ENCODE measurements at regions of chr7 and their contacts with region 1.

Region 1: GRCh38 chr7:7182156-7183060 is at the start of gene C1GALT1:
- DNase-seq: peak; percentile 92 to 98 (median 98)
- ATAC-seq: peak; percentile 93
- H3K4me3 ChIP-seq: peak within 1 kb of the TSS; percentile 91
- H3K4me3 Mint-ChIP-seq: peak within 1 kb of the TSS in 9 of 10 donors; percentile 87 to 97 (median 94)
- H3K27ac ChIP-seq: peak within 1 kb of the TSS; percentile 95
- H3K27ac Mint-ChIP-seq: peak within 1 kb of the TSS; percentile 93 to 100 (median 98)
- H3K4me1 ChIP-seq: peaks cover 22% of the 10 kb centered on the region in 2 donors
- H3K4me1 Mint-ChIP-seq: peaks cover 0 to 14% (median 10%) of the 10 kb centered on the region in 7 donors
- H3K27me3 ChIP-seq: no peaks in the 10 kb centered on the region
- H3K27me3 Mint-ChIP-seq: no peaks in the 10 kb centered on the region
- total RNA-seq, gene C1GALT1: 51.4 to 60.1 (median 55.6) TPM

Region 2: DNA sequence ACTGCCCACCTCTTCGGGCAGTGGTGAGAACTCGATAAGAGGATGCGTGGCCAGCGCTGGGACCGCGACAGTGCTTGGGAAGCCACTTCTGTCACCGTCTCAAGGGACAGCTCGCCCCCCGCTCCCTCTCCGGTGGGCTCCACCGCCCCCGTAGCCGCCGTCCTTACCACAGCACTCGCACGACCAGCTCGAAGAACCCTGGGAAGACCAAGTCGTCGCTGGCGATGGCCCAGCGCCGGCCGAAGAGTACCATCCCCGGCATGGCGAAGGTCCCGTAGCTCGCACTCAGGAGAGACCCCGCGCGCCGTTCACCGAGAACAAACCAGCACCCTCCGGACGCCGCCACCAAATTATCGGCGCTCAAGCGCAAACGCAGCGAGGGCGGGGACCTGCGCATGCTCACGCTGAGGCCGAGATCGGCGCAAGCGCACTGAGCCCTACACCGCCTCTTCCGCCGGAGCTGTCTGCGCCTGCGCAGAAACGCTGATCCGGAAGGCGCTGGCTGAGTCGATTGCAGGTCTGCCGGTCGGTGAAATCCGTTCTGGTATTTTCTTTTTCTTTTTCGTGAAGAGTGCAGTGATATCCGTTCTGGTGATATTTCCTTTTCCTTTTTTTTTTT is 734.7 kb before region 1 on chr7 and contains the start of gene DAGLB:
- CTCF ChIA-PET with region 1: no interaction called
- POLR2A ChIA-PET with region 1: no interaction called
- intact Hi-C with region 1: loop called in 1 of 2 experiments (anchors 5 kb)
- DNase-seq: peak; percentile 94 to 99 (median 97)
- ATAC-seq: peak; percentile 87
- H3K4me3 ChIP-seq: peak within 1 kb of the TSS; percentile 87
- H3K4me3 Mint-ChIP-seq: peak within 1 kb of the TSS; percentile 92 to 99 (median 96)
- H3K27ac ChIP-seq: peak within 1 kb of the TSS; percentile 80
- H3K27ac Mint-ChIP-seq: peak within 1 kb of the TSS; percentile 95 to 98 (median 95)
- H3K4me1 ChIP-seq: peaks cover 8 to 16% of the 10 kb centered on the region in 2 donors
- H3K4me1 Mint-ChIP-seq: peaks cover 27 to 51% (median 40%) of the 10 kb centered on the region in 7 donors
- H3K27me3 ChIP-seq: no peaks in the 10 kb centered on the region
- H3K27me3 Mint-ChIP-seq: peaks cover 0 to 3% (median 0%) of the 10 kb centered on the region in 5 donors
- total RNA-seq, gene DAGLB: 20.6 to 44.3 (median 39.8) TPM

Region 3: DNA sequence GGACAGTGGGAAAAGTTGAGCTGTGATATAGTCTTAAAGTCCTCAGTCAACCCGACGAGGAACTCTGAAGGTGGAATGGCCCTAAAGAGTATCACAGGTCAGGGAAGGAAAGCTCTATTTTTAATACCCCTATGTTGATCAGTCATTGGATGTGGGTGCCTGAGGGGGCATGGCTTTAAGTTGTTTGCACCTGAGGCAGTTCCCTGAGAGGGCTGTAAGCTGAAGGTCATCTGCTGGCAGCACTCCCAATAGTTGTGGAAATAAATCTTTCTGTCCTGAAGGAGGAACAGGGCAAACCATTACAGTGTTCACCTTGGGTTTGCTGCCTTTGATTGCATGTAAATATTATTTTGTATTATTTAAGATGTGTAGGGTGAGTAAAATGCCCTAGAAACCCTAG is 17.8 kb before region 1 on chr7:
- CTCF ChIA-PET with region 1: interaction called, 8 read pairs
- POLR2A ChIA-PET with region 1: interaction called, 109 read pairs
- intact Hi-C with region 1: no loop called
- DNase-seq: no peak
- ATAC-seq: no peak
- H3K4me3 ChIP-seq: no peak overlapping the region
- H3K4me3 Mint-ChIP-seq: peak overlapping the region in 5 of 10 donors; percentile 10 to 61 (median 44)
- H3K27ac ChIP-seq: no peak overlapping the region
- H3K27ac Mint-ChIP-seq: peak overlapping the region in 8 of 9 donors; percentile 3 to 71 (median 35)
- H3K4me1 ChIP-seq: peaks cover 8 to 25% of the 10 kb centered on the region in 2 donors
- H3K4me1 Mint-ChIP-seq: peaks cover 21 to 62% (median 53%) of the 10 kb centered on the region in 7 donors
- H3K27me3 ChIP-seq: no peaks in the 10 kb centered on the region
- H3K27me3 Mint-ChIP-seq: no peaks in the 10 kb centered on the region

Region 4: GRCh38 chr7:7249814-7250213 is 67.4 kb after region 1 on chr7:
- CTCF ChIA-PET with region 1: no interaction called
- POLR2A ChIA-PET with region 1: interaction called, 3 read pairs
- intact Hi-C with region 1: loop called in 1 of 2 experiments (anchors 2 kb)
- DNase-seq: no peak
- ATAC-seq: no peak
- H3K4me3 ChIP-seq: no peak overlapping the region
- H3K4me3 Mint-ChIP-seq: no peak overlapping the region
- H3K27ac ChIP-seq: no peak overlapping the region
- H3K27ac Mint-ChIP-seq: peak overlapping the region in 1 of 9 donors; percentile 92
- H3K4me1 ChIP-seq: peaks cover 0 to 6% of the 10 kb centered on the region in 2 donors
- H3K4me1 Mint-ChIP-seq: peaks cover 10 to 45% (median 29%) of the 10 kb centered on the region in 7 donors
- H3K27me3 ChIP-seq: no peaks in the 10 kb centered on the region
- H3K27me3 Mint-ChIP-seq: no peaks in the 10 kb centered on the region

Region 5: DNA sequence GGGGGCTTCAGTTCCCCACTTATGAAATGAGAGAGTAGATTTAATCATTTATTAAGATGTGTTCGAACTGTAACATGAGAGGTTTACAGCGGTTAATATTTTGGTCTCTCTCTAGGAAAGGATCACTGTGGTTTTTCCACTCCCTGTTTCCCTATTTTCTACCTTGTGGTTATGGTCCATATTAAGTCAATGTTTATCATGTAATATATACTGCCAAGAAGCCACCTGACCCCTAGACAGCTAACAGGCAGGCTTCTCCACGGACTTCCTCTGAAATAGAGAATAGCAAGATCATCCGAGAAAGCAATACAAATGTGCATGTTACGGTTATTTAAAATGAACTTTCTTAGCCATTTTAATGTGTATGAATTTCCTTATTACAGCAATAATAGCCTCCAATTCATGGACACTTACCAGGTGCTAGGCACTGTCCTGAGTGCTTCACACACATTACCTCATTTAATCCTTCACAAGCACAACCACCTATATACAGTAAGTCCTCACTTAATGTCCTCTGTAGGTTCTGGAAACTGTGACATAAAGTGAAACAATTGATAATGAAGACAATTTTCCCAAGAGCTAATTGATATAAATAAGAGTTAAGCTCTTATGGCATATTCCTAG is 354.1 kb after region 1 on chr7:
- CTCF ChIA-PET with region 1: no interaction called
- POLR2A ChIA-PET with region 1: interaction called, 3 read pairs
- intact Hi-C with region 1: loop called (anchors 1 kb)
- DNase-seq: no peak
- ATAC-seq: no peak
- H3K4me3 ChIP-seq: no peak overlapping the region
- H3K4me3 Mint-ChIP-seq: no peak overlapping the region
- H3K27ac ChIP-seq: no peak overlapping the region
- H3K27ac Mint-ChIP-seq: no peak overlapping the region
- H3K4me1 ChIP-seq: no peaks in the 10 kb centered on the region
- H3K4me1 Mint-ChIP-seq: peaks cover 0 to 3% (median 0%) of the 10 kb centered on the region in 7 donors
- H3K27me3 ChIP-seq: no peaks in the 10 kb centered on the region
- H3K27me3 Mint-ChIP-seq: peaks cover 0 to 26% (median 5%) of the 10 kb centered on the region in 5 donors

Region 6: DNA sequence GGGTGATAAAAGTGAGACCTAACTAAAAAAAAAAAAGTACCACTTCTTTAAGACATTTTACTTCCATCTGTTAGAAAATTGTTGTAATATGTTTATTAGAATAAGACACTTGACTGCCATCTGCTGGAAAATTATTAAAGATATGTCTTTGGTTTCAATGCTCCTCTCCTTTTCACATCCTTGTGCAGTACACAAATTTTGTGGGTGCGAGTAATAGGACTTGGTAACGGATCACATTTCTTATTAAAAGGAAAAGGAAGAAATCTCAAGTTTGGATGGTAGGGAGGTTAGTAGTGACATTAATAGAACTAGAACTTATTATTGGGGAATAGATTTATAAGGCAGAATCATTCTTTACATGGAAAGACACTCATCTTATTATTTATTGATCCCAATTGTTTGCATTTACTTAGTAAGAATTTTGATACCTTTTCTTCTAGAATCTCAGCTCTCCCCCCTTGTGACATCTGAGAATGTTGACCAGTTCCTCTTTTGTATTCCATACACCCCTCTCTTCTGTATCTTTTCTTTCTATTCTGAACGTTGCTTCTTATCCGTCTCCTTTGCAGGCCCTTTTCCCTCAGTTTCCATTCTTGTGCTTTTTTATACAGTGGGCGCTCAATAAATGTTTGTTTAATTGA is 579.1 kb after region 1 on chr7:
- CTCF ChIA-PET with region 1: no interaction called
- POLR2A ChIA-PET with region 1: interaction called, 4 read pairs
- intact Hi-C with region 1: loop called (anchors 1 to 5 kb)
- DNase-seq: peak in 7 of 9 donors; percentile 25 to 59 (median 51)
- ATAC-seq: peak; percentile 45
- H3K4me3 ChIP-seq: peak overlapping the region; percentile 48
- H3K4me3 Mint-ChIP-seq: peak overlapping the region; percentile 69 to 99 (median 90)
- H3K27ac ChIP-seq: peak overlapping the region; percentile 76
- H3K27ac Mint-ChIP-seq: peak overlapping the region; percentile 88 to 99 (median 94)
- H3K4me1 ChIP-seq: peaks cover 8 to 31% of the 10 kb centered on the region in 2 donors
- H3K4me1 Mint-ChIP-seq: peaks cover 30 to 54% (median 51%) of the 10 kb centered on the region in 7 donors
- H3K27me3 ChIP-seq: no peaks in the 10 kb centered on the region
- H3K27me3 Mint-ChIP-seq: no peaks in the 10 kb centered on the region

Region 7: DNA sequence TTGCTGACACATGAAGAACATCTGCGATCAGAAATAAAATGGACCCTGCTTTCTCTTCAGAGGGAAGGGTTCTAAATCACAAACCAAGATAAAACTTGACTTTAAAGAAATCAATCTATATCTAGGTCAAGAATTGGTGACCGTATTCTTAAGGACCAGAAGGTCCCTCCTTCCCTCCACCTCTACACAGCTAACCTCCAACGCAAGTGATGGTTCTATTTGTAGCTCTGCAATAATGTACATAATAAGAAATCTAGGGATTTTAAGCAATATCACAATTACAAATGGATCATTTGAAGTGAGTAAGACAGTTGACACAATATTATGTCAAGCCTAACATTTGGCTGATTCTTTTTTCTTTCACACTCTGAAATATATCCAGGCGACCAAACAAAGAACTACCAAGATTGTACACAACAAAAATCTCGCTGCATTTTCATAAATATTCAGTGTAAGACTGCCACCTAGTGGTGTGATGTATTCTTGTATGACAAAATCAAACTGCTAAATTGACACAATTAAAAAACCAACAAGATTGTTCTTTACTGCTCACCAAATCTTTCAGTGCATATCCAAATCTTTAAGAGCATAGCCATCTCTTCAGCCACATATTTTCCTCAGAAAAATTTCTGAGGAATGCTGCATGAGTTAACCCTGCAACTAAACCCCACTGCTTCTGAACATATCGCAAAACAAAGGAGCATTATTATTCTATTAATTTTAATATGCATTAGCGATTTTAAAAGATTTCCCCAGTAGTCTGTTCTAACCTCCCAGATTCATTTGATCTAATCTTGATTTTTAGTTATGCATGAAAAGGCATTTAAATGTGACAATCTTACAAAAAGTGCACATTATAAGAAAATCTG is 1035.0 kb after region 1 on chr7:
- CTCF ChIA-PET with region 1: no interaction called
- POLR2A ChIA-PET with region 1: no interaction called
- intact Hi-C with region 1: loop called in 1 of 2 experiments (anchors 2 kb)
- DNase-seq: peak in 7 of 9 donors; percentile 42 to 76 (median 68)
- ATAC-seq: peak; percentile 84
- H3K4me3 ChIP-seq: no peak overlapping the region
- H3K4me3 Mint-ChIP-seq: no peak overlapping the region
- H3K27ac ChIP-seq: no peak overlapping the region
- H3K27ac Mint-ChIP-seq: peak overlapping the region in 1 of 9 donors; percentile 22
- H3K4me1 ChIP-seq: no peaks in the 10 kb centered on the region
- H3K4me1 Mint-ChIP-seq: peaks cover 0 to 16% (median 3%) of the 10 kb centered on the region in 7 donors
- H3K27me3 ChIP-seq: no peaks in the 10 kb centered on the region
- H3K27me3 Mint-ChIP-seq: no peaks in the 10 kb centered on the region